ENCODE measurements at regions of chr20 and their contacts with region 1.

Region 1: DNA sequence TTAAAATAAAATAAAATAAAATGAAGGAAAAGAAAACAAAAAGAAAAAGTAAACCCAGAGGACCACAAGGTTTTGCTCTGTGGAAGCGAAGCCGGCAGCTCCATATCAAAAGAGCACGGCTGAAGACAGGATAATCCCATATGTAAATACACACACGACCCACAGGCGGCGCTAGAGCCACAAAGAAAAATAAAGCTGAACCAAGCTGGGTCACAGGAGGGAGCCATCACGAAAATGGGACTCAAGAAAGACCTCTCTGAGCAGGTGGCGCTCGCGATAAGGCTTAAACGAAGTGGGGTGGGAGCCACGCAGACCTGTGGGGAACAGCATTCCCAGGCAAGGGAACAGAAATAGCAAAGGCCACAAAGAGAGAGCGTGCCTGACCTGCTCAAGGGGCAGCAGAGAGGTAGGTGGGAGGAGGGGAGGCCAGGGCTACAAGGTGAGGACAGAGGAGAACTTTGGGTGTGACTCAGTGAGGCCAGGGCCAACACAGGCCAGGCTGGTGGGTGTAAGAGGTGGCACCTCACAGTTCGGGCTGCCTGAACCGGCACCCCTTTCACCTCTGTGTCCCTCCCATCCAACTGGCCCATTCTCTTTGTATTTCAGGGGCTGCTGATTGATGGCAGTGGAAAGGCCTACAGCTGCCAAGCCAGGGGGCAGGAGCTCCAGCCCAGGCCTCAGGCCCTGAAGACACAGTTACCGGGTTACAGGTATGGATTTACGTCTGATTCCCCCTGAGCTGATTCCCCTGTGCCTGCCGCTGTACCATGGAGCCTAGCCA is 26.0 kb downstream of the PTGIS start:
- DNase-seq: peak; percentile 29 to 50
- ATAC-seq: peak; percentile 66 to 81
- H3K4me3 ChIP-seq: no peak overlapping the region
- H3K27ac ChIP-seq: no peak overlapping the region
- H3K4me1 ChIP-seq: no peaks in the 10 kb centered on the region
- H3K27me3 ChIP-seq: no peaks in the 10 kb centered on the region
- CTCF ChIP-seq: peak; percentile 68 to 84 (median 72)
- POLR2A ChIP-seq: no peak

Region 2: GRCh38 chr20:49330544-49331239 is 211.2 kb before region 1 on chr20:
- in situ Hi-C with region 1: loop called in 3 of 4 experiments (anchors 5 to 10 kb)
- intact Hi-C with region 1: no loop called
- DNase-seq: no peak
- ATAC-seq: no peak
- H3K4me3 ChIP-seq: no peak overlapping the region
- H3K27ac ChIP-seq: no peak overlapping the region
- H3K4me1 ChIP-seq: no peaks in the 10 kb centered on the region
- H3K27me3 ChIP-seq: peaks cover 0 to 13% (median 13%) of the 10 kb centered on the region in 3 donors
- CTCF ChIP-seq: no peak
- POLR2A ChIP-seq: no peak

Region 3: GRCh38 chr20:49397525-49397924 is 144.4 kb before region 1 on chr20:
- in situ Hi-C with region 1: no loop called
- intact Hi-C with region 1: no loop called
- DNase-seq: peak in 1 of 2 donors; percentile 70
- ATAC-seq: no peak
- H3K4me3 ChIP-seq: no peak overlapping the region
- H3K27ac ChIP-seq: peak overlapping the region; percentile 79 to 84 (median 82)
- H3K4me1 ChIP-seq: peaks cover 23 to 48% of the 10 kb centered on the region in 2 donors
- H3K27me3 ChIP-seq: no peaks in the 10 kb centered on the region
- CTCF ChIP-seq: no peak
- POLR2A ChIP-seq: no peak

Region 4: DNA sequence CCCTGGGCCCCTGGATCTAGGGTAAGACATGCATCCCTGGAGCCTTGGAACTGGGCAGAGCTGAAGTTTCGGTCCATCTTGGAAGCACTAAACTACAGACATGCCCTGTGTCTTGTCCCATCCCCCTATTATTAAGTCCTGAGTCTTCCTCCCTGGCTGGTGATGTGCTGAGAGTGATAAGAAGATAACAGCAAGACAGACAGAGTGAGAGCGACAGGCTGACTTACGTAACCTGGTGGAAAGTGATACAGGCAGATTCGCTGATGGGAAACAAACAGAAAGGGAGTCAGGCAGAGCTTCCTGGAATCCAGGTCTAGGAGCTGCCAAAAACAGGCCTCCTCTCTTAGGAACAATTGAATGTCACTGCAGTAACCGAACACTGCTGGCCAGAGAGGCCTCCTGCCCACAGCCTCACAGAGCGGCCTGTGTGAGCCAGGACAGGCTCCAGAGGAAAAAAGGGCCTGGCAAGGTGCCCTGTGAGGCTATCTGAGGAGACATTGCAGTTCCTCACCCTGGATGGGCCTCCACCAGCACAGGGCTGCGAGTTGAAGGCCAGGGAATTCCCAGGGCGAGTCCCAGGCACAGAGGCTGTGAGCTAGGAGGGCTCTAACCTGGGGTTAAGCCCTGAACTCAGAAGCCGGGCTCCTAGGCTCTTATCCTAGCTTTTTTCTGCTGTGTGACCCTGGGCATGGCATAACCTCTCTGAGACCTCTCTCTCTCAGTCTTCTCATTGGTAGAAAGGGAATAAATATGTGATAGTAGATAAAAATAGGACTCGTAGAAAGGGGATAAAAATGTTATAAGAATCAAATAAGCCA is 206.0 kb after region 1 on chr20:
- in situ Hi-C with region 1: no loop called
- intact Hi-C with region 1: no loop called
- DNase-seq: peak; percentile 92 to 98
- ATAC-seq: peak; percentile 94 to 98
- H3K4me3 ChIP-seq: no peak overlapping the region
- H3K27ac ChIP-seq: peak overlapping the region; percentile 78 to 90 (median 87)
- H3K4me1 ChIP-seq: peaks cover 32 to 40% of the 10 kb centered on the region in 2 donors
- H3K27me3 ChIP-seq: no peaks in the 10 kb centered on the region
- CTCF ChIP-seq: no peak
- POLR2A ChIP-seq: no peak

Region 5: DNA sequence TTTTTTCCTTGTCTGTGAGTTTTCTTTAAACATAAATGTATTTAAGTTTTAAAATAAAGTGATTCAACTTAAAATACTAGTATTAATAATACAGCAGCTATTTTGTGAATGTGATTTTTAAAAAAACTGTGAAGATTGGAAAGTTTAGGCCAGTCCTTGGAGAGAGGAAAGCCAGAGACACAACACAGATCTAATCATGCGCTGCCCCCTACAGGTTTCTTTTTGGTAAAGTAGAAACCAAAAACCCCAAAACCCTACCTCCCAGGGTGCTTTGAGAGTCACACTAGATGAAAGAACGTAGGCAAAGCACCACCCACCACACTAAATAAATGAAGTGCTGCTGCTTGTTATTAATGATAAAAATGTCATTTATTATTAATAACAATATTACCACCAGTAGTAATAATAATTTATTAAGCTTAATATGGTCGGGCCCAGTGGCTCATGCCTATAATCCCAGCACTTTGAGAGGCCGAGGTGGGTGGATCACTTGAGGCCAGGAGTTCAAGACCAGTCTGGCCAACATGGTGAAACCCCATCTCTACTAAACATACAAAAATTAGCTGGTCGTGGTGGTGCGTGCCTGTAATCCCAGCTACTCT is 304.4 kb after region 1 on chr20:
- in situ Hi-C with region 1: loop called in 1 of 4 experiments (anchors 10 kb)
- intact Hi-C with region 1: loop called (anchors 10 kb)
- DNase-seq: no peak
- ATAC-seq: peak; percentile 55 to 80
- H3K4me3 ChIP-seq: no peak overlapping the region
- H3K27ac ChIP-seq: no peak overlapping the region
- H3K4me1 ChIP-seq: peaks cover 18 to 24% of the 10 kb centered on the region in 2 donors
- H3K27me3 ChIP-seq: no peaks in the 10 kb centered on the region
- CTCF ChIP-seq: peak; percentile 58 to 73 (median 68)
- POLR2A ChIP-seq: no peak

Region 6: DNA sequence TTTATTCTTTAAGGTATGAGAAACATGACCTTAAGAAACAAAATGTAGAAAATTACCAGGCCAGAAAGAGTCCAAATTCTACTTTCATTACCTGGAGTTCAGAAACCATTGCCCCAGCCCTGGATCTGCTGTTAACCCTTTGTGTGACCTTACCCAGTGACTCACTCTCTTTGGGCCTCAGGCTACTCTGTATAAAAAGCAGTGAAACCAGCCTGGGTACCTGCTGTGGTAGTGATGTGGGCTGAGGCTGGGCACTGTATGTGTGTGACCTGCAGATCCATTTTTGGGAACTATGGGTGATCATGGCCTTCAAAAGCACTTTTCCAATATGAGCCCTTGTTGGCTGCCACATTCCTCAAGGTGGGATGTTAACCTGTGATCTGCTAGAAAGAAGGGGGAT is 317.9 kb after region 1 on chr20:
- in situ Hi-C with region 1: no loop called
- intact Hi-C with region 1: no loop called
- DNase-seq: no peak
- ATAC-seq: no peak
- H3K4me3 ChIP-seq: no peak overlapping the region
- H3K27ac ChIP-seq: no peak overlapping the region
- H3K4me1 ChIP-seq: peaks cover 0 to 7% of the 10 kb centered on the region in 2 donors
- H3K27me3 ChIP-seq: no peaks in the 10 kb centered on the region
- CTCF ChIP-seq: no peak
- POLR2A ChIP-seq: no peak

Region 7: GRCh38 chr20:49888345-49888966 is 346.5 kb after region 1 on chr20:
- in situ Hi-C with region 1: no loop called
- intact Hi-C with region 1: loop called (anchors 10 kb)
- DNase-seq: peak in 1 of 2 donors; percentile 56
- ATAC-seq: peak; percentile 37 to 67
- H3K4me3 ChIP-seq: no peak overlapping the region
- H3K27ac ChIP-seq: peak overlapping the region; percentile 49 to 72 (median 67)
- H3K4me1 ChIP-seq: peaks cover 24 to 26% of the 10 kb centered on the region in 2 donors
- H3K27me3 ChIP-seq: no peaks in the 10 kb centered on the region
- CTCF ChIP-seq: peak; percentile 66 to 82 (median 76)
- POLR2A ChIP-seq: no peak

Region 8: GRCh38 chr20:49928401-49929141 is 386.6 kb after region 1 on chr20:
- in situ Hi-C with region 1: no loop called
- intact Hi-C with region 1: loop called (anchors 5 kb)
- DNase-seq: peak; percentile 62 to 72
- ATAC-seq: peak; percentile 80
- H3K4me3 ChIP-seq: no peak overlapping the region
- H3K27ac ChIP-seq: no peak overlapping the region
- H3K4me1 ChIP-seq: no peaks in the 10 kb centered on the region
- H3K27me3 ChIP-seq: no peaks in the 10 kb centered on the region
- CTCF ChIP-seq: peak; percentile 87 to 95 (median 88)
- POLR2A ChIP-seq: no peak

Measured in gastrocnemius medialis (tissue), 4 donors.